ENCODE measurements at regions of chrX and their contacts with region 1.

Region 1: DNA sequence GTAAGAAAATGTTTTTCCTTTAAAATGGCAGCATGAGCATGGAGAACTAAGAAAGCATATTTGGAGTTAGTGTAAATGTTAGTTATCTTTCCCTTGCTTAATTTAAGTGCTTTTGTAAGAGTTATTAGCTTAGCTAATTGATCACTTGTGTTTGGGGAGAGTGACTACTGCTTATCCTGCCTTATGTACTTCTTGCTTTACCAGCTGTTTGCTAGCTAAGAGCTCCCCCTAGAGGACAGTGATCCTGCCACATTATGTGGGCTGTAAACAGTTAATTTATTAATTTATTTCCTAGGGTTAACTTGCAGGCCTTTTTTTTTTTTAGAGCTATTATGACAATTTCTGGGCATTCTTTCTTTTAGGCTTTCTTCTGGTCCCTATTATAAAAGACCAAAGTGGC is 435.8 kb downstream of the MAGEB5 start:
- DNase-seq: no peak
- ATAC-seq: no peak
- H3K4me3 ChIP-seq: no peak overlapping the region
- H3K4me3 Mint-ChIP-seq: no peak overlapping the region
- H3K27ac ChIP-seq: no peak overlapping the region
- H3K27ac Mint-ChIP-seq: no peak overlapping the region
- H3K4me1 ChIP-seq: no peaks in the 10 kb centered on the region
- H3K4me1 Mint-ChIP-seq: no peaks in the 10 kb centered on the region
- H3K27me3 ChIP-seq: no peaks in the 10 kb centered on the region
- H3K27me3 Mint-ChIP-seq: no peaks in the 10 kb centered on the region

Region 2: DNA sequence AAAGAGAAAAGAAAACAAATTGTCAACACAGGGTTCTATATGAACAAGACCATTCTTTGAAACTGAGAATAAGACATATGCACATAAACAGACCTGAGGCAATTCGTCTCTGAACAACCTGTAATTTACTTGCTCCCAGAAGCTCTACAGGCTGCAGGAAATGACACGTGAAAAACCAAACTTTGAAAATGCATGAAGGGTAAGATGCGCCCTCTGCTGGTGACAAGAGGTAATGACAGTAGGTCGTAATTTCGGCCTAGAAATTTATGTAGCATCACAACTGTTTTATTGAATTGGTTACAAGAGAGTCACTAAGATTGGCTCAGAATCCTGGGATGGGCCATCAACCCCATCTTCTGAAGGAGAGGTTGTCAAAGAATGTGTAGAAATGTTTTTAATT is 534.9 kb after region 1 on chrX:
- CTCF ChIA-PET with region 1: no interaction called
- POLR2A ChIA-PET with region 1: no interaction called
- intact Hi-C with region 1: loop called in 1 of 2 experiments (anchors 2 kb)
- DNase-seq: peak in 6 of 9 donors; percentile 8 to 45 (median 34)
- ATAC-seq: no peak
- H3K4me3 ChIP-seq: no peak overlapping the region
- H3K4me3 Mint-ChIP-seq: no peak overlapping the region
- H3K27ac ChIP-seq: no peak overlapping the region
- H3K27ac Mint-ChIP-seq: no peak overlapping the region
- H3K4me1 ChIP-seq: no peaks in the 10 kb centered on the region
- H3K4me1 Mint-ChIP-seq: peaks cover 0 to 4% (median 0%) of the 10 kb centered on the region in 7 donors
- H3K27me3 ChIP-seq: no peaks in the 10 kb centered on the region
- H3K27me3 Mint-ChIP-seq: no peaks in the 10 kb centered on the region

Region 3: DNA sequence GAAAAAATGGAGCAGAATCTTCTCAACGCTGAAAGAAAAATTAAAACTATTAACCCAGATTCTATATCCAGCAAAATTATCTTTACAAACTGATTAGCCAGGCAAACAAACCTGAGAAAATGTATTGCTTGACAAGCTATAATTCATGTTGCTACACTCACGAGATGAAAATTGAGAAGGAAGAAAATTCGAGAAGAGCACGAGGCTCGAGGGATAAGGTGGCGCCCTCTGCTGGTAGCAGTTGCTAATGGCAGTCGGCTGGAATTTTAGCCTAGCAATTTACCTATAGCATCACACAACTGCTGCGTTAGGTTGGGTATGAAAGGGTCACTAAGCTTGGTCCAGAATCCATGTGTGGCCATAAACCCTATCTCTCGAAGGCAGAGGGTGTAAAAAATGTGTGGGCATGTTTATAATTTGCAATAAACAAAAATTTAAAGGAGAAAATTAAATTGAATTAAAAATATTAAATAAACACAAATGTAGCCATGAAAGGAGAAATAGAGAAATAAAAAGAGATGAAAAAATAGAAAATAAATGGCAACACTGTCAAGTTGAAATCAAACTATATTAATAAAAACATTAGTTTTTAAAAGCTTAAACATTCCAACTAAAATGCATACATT is 684.8 kb after region 1 on chrX:
- CTCF ChIA-PET with region 1: no interaction called
- POLR2A ChIA-PET with region 1: no interaction called
- intact Hi-C with region 1: loop called in 1 of 2 experiments (anchors 5 kb)
- DNase-seq: peak in 5 of 9 donors; percentile 2 to 19 (median 7)
- ATAC-seq: no peak
- H3K4me3 ChIP-seq: no peak overlapping the region
- H3K4me3 Mint-ChIP-seq: no peak overlapping the region
- H3K27ac ChIP-seq: no peak overlapping the region
- H3K27ac Mint-ChIP-seq: no peak overlapping the region
- H3K4me1 ChIP-seq: no peaks in the 10 kb centered on the region
- H3K4me1 Mint-ChIP-seq: no peaks in the 10 kb centered on the region
- H3K27me3 ChIP-seq: no peaks in the 10 kb centered on the region
- H3K27me3 Mint-ChIP-seq: no peaks in the 10 kb centered on the region